ENCODE measurements at regions of chr9 and their contacts with region 1.

Region 1: DNA sequence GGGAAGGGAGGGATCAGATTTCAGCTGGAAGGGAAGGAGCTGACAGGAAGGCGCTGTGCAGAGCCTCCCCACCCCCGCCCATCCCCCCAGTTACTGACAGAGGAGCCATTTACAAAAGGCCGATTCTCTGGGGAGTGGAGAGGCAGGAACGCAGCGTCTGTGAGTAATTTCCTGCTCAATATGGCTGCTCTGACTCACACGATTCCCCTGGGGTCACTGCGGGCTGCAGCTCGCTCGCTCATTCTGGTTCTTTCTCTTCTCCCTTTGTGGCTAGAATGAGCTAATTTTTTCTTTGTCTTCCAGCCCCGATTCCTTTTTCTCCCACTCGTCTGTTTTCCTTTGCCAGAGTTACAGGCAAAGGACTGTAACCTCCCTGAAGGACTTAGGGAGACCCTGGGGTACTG is 28.8 kb downstream of the PTPA start:
- DNase-seq: peak; percentile 96 to 97
- ATAC-seq: peak; percentile 82 to 86
- H3K4me3 ChIP-seq: peak overlapping the region; percentile 51 to 77 (median 56)
- H3K27ac ChIP-seq: peak overlapping the region; percentile 95 to 100 (median 98)
- H3K4me1 ChIP-seq: peaks cover 67 to 72% of the 10 kb centered on the region in 2 donors
- H3K27me3 ChIP-seq: no peaks in the 10 kb centered on the region
- CTCF ChIP-seq: no peak
- POLR2A ChIP-seq: peak; percentile 36 to 60

Region 2: GRCh38 chr9:129080602-129081387 is 59.2 kb before region 1 on chr9 and contains the start of gene DOLPP1:
- in situ Hi-C with region 1: no loop called
- intact Hi-C with region 1: no loop called
- DNase-seq: peak; percentile 99
- ATAC-seq: peak; percentile 92 to 94
- H3K4me3 ChIP-seq: peak within 1 kb of the TSS; percentile 77 to 89 (median 82)
- H3K27ac ChIP-seq: peak within 1 kb of the TSS; percentile 84 to 96 (median 93)
- H3K4me1 ChIP-seq: peaks cover 10 to 19% of the 10 kb centered on the region in 2 donors
- H3K27me3 ChIP-seq: no peaks in the 10 kb centered on the region
- CTCF ChIP-seq: no peak
- POLR2A ChIP-seq: peak; percentile 83 to 85
- total RNA-seq, gene DOLPP1: 1.6 to 4.7 (median 2.8) TPM

Region 3: DNA sequence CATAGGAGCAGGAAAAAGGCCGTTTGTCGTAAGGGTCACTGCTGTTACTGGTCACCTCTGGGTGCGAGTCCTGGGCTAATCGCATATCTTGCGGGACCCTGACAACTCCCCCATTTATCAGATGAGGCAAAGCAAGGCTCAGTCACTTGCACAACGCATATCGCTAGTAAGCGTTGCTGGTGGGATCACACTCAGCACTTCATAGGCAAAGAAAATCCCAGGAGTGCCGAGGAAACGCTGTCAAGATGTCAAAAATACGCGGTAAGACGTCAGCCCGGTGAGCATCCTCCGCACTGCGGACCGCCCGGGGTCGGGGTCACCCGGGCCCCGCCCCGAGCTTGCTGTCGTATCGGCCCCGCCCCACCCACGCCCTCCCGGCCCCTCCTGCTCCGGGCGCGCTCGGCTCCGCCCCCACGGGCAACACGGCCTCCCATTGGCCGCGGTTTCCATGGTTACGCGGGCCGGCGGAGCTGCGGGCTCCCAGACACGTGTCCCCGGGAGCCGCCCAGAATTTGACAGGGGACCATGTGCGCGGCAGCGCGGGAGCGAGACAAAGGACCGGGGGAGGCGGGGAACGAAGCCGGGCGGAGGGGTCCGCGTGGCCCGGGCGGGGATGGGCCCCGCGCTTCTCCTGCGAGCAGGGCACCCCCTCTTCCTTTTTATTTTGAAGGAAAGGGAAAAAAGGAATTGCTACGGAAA is 118.3 kb after region 1 on chr9:
- in situ Hi-C with region 1: no loop called
- intact Hi-C with region 1: loop called (anchors 2 kb)
- DNase-seq: peak; percentile 66 to 79
- ATAC-seq: peak; percentile 71 to 74
- H3K4me3 ChIP-seq: peak overlapping the region; percentile 1 to 46 (median 32)
- H3K27ac ChIP-seq: peak overlapping the region; percentile 34 to 71 (median 64)
- H3K4me1 ChIP-seq: peaks cover 17 to 23% of the 10 kb centered on the region in 2 donors
- H3K27me3 ChIP-seq: peaks cover 8 to 23% (median 16%) of the 10 kb centered on the region in 3 donors
- CTCF ChIP-seq: no peak
- POLR2A ChIP-seq: no peak

Region 4: GRCh38 chr9:129482521-129483414 is 342.8 kb after region 1 on chr9:
- in situ Hi-C with region 1: loop called in 2 of 4 experiments (anchors 25 kb)
- intact Hi-C with region 1: loop called (anchors 2 kb)
- DNase-seq: peak; percentile 67 to 87
- ATAC-seq: peak; percentile 67 to 70
- H3K4me3 ChIP-seq: peak overlapping the region; percentile 57 to 86 (median 69)
- H3K27ac ChIP-seq: peak overlapping the region; percentile 96 to 99 (median 98)
- H3K4me1 ChIP-seq: peaks cover 29 to 41% of the 10 kb centered on the region in 2 donors
- H3K27me3 ChIP-seq: no peaks in the 10 kb centered on the region
- CTCF ChIP-seq: no peak
- POLR2A ChIP-seq: peak; percentile 19 to 46

Region 5: DNA sequence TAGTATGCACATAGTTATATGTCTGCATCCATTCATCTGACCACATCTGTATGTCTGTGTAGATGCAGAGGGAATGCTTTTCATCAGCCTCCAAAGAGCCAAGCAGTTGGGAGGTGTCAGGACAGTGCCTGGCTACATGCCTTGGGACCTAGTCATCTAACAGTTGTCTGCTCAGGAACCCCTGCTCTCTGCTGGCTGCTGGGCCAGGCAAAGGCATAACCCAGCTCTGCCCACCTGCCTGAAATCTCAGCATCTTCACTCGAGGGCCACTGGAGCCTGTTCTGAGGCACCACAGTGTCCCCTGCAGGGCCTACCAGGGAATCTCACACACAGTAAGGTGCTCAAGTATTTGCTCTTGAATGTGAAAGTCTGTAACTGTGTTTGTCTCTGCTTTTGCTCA is 477.2 kb after region 1 on chr9:
- in situ Hi-C with region 1: loop called in 3 of 4 experiments (anchors 5 to 10 kb)
- intact Hi-C with region 1: no loop called
- DNase-seq: no peak
- ATAC-seq: no peak
- H3K4me3 ChIP-seq: no peak overlapping the region
- H3K27ac ChIP-seq: no peak overlapping the region
- H3K4me1 ChIP-seq: peaks cover 0 to 5% of the 10 kb centered on the region in 2 donors
- H3K27me3 ChIP-seq: peaks cover 14 to 27% (median 16%) of the 10 kb centered on the region in 3 donors
- CTCF ChIP-seq: no peak
- POLR2A ChIP-seq: no peak

Region 6: DNA sequence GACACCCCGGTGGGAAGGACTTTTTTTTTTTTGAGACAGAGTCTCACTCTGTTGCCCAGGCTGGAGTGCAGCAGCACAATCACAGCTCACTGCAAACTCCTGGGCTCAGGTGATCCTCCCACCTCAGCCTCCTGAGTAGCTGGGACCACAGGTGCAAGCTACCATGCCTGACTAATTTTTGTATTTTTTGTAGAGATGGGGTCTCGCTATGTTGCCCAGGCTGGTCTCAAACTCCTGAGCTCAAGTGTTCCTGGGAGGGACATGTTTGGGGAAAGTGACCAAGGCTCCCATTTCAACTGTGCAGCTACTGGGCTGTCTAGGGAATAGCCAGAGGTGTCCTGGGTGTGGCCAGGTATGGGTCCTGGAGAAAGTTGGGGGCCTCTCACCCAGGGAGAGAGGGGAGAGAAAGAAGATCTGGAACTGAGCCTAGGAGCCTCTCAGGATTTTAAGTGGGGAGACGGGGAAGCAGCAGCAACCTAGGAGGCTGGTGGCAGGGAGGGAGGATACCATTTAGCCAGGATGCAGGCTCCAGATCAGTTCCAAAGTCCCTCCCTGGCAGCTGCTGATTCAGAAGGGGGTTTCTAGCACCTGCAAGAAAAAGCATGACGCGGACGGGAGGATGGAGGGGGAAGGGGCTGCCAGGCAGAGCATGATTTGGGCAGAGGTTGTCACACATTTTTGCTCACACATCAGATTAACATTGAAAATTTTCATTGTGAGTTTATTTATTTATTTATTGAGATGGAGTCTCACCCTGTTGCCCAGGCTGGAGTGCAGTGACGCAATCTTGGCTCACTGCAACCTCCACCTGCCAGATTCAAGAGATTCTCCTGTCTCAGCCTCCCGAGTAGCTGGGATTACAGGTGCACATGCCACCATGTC is 656.3 kb after region 1 on chr9:
- in situ Hi-C with region 1: loop called in 2 of 4 experiments (anchors 10 to 25 kb)
- intact Hi-C with region 1: no loop called
- DNase-seq: no peak
- ATAC-seq: no peak
- H3K4me3 ChIP-seq: no peak overlapping the region
- H3K27ac ChIP-seq: no peak overlapping the region
- H3K4me1 ChIP-seq: no peaks in the 10 kb centered on the region
- H3K27me3 ChIP-seq: no peaks in the 10 kb centered on the region
- CTCF ChIP-seq: no peak
- POLR2A ChIP-seq: no peak